Activated CD8-positive, alpha-beta T cell treated with anti-CD3 and anti-CD28 coated beads, Interleukin-2, amount 10 ng/mL, durations not matched to agents 7 days and 5 days (primary cell): ENCODE measurements at regions of chr7 and their contacts with region 1.

Region 1: DNA sequence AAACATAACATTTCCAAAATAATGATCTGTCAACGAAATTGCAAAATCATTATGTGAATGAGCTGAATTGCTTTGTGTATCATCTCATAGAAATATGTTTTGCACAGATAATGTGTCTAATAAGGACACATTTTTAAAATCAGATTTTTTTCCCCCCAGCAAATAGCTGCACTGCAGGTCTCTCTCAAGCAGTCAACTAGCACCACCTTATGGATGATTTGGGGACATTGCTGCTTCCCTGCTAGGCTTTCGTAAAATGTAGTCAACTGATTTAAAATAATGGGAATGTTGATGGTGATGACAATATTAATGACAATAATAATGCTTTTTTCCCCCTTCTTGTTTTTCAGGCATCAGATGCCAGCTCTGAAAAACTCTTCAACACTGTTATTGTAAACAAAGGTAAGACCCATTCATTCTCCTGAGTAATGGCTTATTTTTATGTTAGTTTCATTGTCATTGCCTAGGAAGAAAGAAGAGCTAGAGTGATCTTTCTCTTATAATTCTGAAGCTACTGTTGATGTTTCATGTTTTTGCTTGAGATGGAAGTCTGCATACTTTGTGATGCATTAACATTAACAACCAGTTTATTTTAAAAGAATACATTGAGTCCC is 433.6 kb upstream of the GALNT17 start:
- DNase-seq: peak; percentile 48
- ATAC-seq: no peak
- H3K4me3 Mint-ChIP-seq: no peak overlapping the region
- H3K27ac Mint-ChIP-seq: no peak overlapping the region
- H3K4me1 Mint-ChIP-seq: peaks cover 19% of the 10 kb centered on the region
- H3K27me3 Mint-ChIP-seq: peaks cover 26% of the 10 kb centered on the region

Region 2: DNA sequence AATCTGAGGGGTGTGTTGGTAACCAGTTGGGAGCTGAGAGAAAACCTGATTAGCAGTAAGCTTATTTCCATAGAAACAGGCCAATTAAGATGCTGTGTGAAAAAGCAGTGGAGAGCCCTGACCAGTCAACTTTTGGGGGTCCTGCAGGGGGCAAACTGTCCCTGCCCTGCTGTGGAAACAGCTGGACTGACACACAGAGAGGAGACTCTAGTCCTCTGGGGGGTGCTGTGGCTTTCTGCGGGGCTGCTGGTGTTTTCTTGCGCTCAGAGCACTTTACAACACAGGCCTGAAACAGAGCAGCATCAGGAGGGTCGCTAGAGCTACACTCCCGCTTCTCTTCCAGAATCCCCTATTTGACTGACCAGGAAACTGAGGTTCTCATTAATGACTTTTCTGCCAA is 113.3 kb before region 1 on chr7:
- CTCF ChIA-PET with region 1: interaction called, 17 read pairs
- POLR2A ChIA-PET with region 1: no interaction called
- DNase-seq: peak; percentile 25
- ATAC-seq: peak; percentile 47
- H3K4me3 Mint-ChIP-seq: no peak overlapping the region
- H3K27ac Mint-ChIP-seq: no peak overlapping the region
- H3K4me1 Mint-ChIP-seq: no peaks in the 10 kb centered on the region
- H3K27me3 Mint-ChIP-seq: no peaks in the 10 kb centered on the region

Region 3: GRCh38 chr7:70738151-70738885 is 40.0 kb after region 1 on chr7:
- CTCF ChIA-PET with region 1: no interaction called
- POLR2A ChIA-PET with region 1: no interaction called
- DNase-seq: no peak
- ATAC-seq: no peak
- H3K4me3 Mint-ChIP-seq: no peak overlapping the region
- H3K27ac Mint-ChIP-seq: no peak overlapping the region
- H3K4me1 Mint-ChIP-seq: peaks cover 2% of the 10 kb centered on the region
- H3K27me3 Mint-ChIP-seq: no peaks in the 10 kb centered on the region